Calu3 (cell line): ENCODE measurements at regions of chr5 and their contacts with region 1.

Region 1: GRCh38 chr5:148443998-148444397 is 60.2 kb downstream of the FBXO38 start:
- DNase-seq: peak; percentile 70
- H3K4me3 Mint-ChIP-seq: no peak overlapping the region
- H3K27ac Mint-ChIP-seq: peak overlapping the region; percentile 23
- H3K4me1 Mint-ChIP-seq: no peaks in the 10 kb centered on the region
- H3K27me3 Mint-ChIP-seq: peaks cover under 1% of the 10 kb centered on the region
- CTCF ChIP-seq: peak; percentile 76

Region 2: GRCh38 chr5:148687427-148687826 is 243.4 kb after region 1 on chr5:
- CTCF ChIA-PET with region 1: interaction called, 5 read pairs
- intact Hi-C with region 1: loop called (anchors 1 kb)
- DNase-seq: peak; percentile 42
- H3K4me3 Mint-ChIP-seq: no peak overlapping the region
- H3K27ac Mint-ChIP-seq: no peak overlapping the region
- H3K4me1 Mint-ChIP-seq: peaks cover 12% of the 10 kb centered on the region
- H3K27me3 Mint-ChIP-seq: peaks cover 26% of the 10 kb centered on the region
- CTCF ChIP-seq: peak; percentile 73

Region 3: GRCh38 chr5:148826053-148826738 is 382.2 kb after region 1 on chr5 and contains the start of gene ADRB2:
- CTCF ChIA-PET with region 1: no interaction called
- intact Hi-C with region 1: loop called (anchors 5 kb)
- DNase-seq: peak; percentile 99
- H3K4me3 Mint-ChIP-seq: peak within 1 kb of the TSS; percentile 88
- H3K27ac Mint-ChIP-seq: peak within 1 kb of the TSS; percentile 79
- H3K4me1 Mint-ChIP-seq: peaks cover 16% of the 10 kb centered on the region
- H3K27me3 Mint-ChIP-seq: no peaks in the 10 kb centered on the region
- CTCF ChIP-seq: no peak
- total RNA-seq, gene ADRB2: 16.6 and 16.9 TPM in 2 replicates